ENCODE measurements at regions of chr17 and their contacts with region 1.

Region 1: DNA sequence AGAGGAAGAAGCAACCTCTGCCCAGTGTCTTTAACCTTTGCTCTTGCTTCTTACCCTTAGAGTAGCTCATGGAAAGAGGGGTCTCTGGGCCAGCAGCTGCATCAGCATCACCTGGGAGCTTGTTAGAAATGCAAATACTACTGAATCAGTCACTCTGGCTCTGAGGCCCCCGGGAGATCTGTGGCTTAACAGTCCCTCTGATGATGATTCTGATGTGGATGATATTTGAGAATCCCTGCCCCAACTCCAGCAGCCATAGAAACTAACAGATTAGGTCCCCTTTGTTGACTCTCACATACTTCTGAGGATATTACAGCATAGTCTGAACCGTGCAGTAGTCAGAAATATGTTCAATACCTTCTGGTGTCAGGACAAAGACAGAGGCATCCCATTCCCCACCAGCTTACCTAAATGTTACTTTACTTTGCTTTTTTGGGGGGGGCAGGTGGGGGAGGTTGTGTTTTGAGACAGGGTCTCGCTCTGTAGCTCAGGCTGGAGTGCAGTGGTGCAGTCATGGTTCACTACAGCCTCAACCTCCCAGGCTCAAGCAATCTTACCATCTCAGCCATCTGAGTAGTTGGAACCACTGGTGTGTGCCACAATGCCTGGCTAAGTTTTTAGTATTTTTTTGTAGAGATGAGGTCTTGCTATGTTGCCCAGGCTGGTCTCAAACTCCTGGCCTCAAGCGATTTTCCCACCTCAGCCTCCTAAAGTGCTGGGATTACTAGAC is 220.1 kb downstream of the CCDC182 start:
- DNase-seq: no peak
- H3K4me3 ChIP-seq: no peak overlapping the region
- H3K27ac ChIP-seq: no peak overlapping the region
- H3K4me1 ChIP-seq: peaks cover 0 to 6% of the 10 kb centered on the region in 2 donors
- H3K27me3 ChIP-seq: no peaks in the 10 kb centered on the region
- CTCF ChIP-seq: no peak
- POLR2A ChIP-seq: no peak

Region 2: DNA sequence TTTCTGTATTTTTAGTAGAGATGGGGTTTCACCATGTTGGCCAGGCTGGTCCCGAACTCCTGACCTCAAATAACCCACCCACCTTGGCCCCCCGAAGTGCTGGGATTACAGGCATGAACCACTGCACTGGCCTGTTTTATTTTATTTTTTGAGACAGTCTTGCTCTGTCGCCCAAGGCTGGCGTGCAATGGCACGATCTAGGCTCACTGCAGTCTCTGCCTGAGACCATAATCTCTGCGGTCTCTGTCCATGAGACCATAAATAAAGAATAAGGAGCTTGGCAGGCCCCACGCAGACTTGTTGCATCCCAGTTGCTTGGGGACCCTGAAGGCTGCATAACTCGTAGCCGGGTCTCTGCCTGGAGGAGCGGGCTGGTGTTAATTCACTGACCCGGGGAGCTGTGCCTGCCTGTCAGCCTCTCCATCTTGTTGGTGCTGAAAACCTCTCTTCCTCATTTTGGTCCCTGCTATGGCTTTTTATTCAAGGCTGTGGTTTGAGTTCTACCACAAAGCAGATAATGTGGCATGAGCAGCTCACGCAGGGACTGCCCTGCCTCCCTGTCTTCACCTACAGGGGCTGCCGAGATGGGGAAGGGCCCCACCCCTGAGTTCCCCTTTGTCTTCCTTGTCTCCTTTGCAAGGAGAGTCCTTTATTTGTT is 186.6 kb before region 1 on chr17:
- intact Hi-C with region 1: no loop called
- DNase-seq: no peak
- H3K4me3 ChIP-seq: no peak overlapping the region
- H3K27ac ChIP-seq: no peak overlapping the region
- H3K4me1 ChIP-seq: no peaks in the 10 kb centered on the region
- H3K27me3 ChIP-seq: no peaks in the 10 kb centered on the region
- CTCF ChIP-seq: no peak
- POLR2A ChIP-seq: no peak

Region 3: GRCh38 chr17:57478484-57479250 is 46.3 kb before region 1 on chr17:
- intact Hi-C with region 1: loop called (anchors 1 kb)
- DNase-seq: no peak
- H3K4me3 ChIP-seq: no peak overlapping the region
- H3K27ac ChIP-seq: peak overlapping the region in 1 of 2 donors; percentile 17
- H3K4me1 ChIP-seq: peaks cover 3 to 7% of the 10 kb centered on the region in 2 donors
- H3K27me3 ChIP-seq: no peaks in the 10 kb centered on the region
- CTCF ChIP-seq: no peak
- POLR2A ChIP-seq: no peak